Activated naive CD4-positive, alpha-beta T cell treated with anti-CD3 and anti-CD28 coated beads for 36 hours (primary cell): ENCODE measurements at regions of chr10 and their contacts with region 1.

Region 1: DNA sequence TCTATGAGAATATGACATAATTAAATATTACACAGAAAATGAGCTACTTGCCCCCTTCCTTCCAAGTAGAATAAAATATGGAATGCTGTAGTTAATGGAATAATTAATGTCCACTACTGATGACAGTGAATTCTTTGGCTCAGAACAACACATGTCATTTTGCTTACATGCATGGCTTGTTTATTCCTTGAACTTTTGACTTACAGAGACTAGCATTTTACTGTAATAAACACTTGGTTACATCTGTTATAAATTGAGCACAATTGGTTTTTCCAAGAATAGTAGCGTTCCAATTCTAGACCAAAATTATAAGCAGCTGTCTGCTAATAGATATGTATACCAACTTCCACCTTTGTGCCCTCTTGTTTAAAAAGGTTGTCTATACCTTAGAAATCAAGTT is 286.7 kb downstream of the OTUD1 start:
- DNase-seq: no peak
- H3K4me3 Mint-ChIP-seq: no peak overlapping the region
- H3K27ac Mint-ChIP-seq: no peak overlapping the region
- H3K4me1 Mint-ChIP-seq: peaks cover 4% of the 10 kb centered on the region
- H3K27me3 Mint-ChIP-seq: peaks cover 20% of the 10 kb centered on the region

Region 2: DNA sequence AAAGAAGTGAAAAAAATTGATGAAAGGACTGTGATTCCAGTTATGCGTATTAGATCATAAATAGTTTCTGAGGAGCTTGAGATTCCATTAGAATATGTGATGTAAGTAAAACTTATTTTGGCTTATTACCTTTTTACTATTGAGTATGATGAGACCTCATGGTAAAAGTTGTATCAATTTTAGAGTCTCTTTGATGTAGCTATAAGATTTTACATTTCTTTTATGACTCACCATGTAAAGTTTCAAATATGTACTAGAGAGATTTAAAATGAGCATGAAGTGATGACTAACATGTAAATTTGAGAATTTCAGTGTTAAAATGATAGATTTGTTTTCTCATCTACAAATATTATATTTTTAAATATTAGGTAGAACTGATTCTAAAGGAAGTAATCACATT is 10.2 kb before region 1 on chr10:
- CTCF ChIA-PET with region 1: no interaction called
- intact Hi-C with region 1: loop called (anchors 1 kb)
- DNase-seq: no peak
- H3K4me3 Mint-ChIP-seq: no peak overlapping the region
- H3K27ac Mint-ChIP-seq: no peak overlapping the region
- H3K4me1 Mint-ChIP-seq: peaks cover 12% of the 10 kb centered on the region
- H3K27me3 Mint-ChIP-seq: peaks cover 28% of the 10 kb centered on the region

Region 3: GRCh38 chr10:23780331-23780730 is 54.8 kb after region 1 on chr10:
- CTCF ChIA-PET with region 1: no interaction called
- intact Hi-C with region 1: loop called (anchors 10 kb)
- DNase-seq: no peak
- H3K4me3 Mint-ChIP-seq: no peak overlapping the region
- H3K27ac Mint-ChIP-seq: no peak overlapping the region
- H3K4me1 Mint-ChIP-seq: no peaks in the 10 kb centered on the region
- H3K27me3 Mint-ChIP-seq: peaks cover 13% of the 10 kb centered on the region